Activated B cell treated with CpG ODN at 0.5 μM for 24 hours (primary cell): ENCODE measurements at regions of chr20 and their contacts with region 1.

Region 1: DNA sequence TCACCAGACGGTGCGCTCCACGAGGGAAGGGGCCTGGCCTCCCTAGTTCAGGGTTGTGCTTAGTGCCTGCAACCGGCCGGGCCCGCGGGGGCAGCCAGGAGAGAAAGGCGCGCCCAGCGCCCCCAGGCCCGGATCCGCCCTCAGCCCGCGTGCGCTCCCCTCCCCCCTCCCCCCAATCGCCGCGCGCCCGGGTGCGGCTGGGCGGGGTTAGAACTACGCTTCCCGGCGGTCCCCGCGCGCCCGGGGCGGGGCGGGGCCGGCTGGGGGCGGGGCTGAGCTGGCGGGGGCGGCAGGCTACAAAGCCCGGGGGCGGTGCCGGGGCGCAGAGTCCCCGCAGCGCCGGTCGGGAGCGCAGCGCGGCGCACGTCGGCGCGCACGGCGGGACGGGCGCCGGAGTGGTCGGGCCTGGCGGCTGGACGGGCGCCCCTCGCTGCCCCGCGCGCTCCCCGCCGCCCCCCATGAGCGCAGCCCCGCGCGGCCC is at the start of gene RBM38:
- DNase-seq: peak; percentile 77
- ATAC-seq: peak; percentile 69
- H3K4me3 Mint-ChIP-seq: peak within 1 kb of the TSS; percentile 92
- H3K27ac Mint-ChIP-seq: peak within 1 kb of the TSS; percentile 96
- H3K4me1 Mint-ChIP-seq: peaks cover 63% of the 10 kb centered on the region
- H3K27me3 Mint-ChIP-seq: no peaks in the 10 kb centered on the region
- CTCF ChIP-seq: no peak
- total RNA-seq, gene RBM38: 69.6 and 70.7 TPM in 2 replicates

Region 2: DNA sequence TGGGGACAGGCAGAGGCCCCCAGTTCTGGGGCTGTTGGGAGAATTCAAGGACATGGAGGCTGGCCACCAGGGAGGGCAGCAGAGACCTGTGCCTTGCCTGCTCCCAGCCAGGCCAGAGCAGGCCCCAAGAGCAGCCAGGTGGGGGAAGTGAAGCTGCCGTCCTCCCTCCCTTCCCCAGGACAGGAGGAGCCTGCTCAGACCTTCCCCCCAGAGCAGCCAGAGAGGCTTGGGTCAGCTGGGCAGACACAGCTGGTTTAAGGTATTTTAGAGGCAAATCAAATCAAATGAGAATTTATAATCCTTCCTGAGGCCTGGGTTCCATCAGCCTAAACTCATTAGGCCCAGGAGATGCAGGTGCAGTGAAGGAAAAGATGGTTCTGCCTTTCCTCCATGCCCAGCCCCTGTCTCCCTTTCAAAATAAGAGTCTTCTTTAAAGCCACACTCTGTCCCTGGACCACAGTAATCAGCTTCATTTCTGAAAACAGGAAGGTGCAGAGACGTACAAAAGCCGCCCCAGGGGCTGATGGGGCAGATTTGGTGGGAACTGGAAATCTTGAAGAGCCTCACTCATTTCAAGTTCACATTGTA is 146.4 kb before region 1 on chr20:
- CTCF ChIA-PET with region 1: no interaction called
- POLR2A ChIA-PET with region 1: no interaction called
- intact Hi-C with region 1: no loop called
- DNase-seq: no peak
- ATAC-seq: no peak
- H3K4me3 Mint-ChIP-seq: no peak overlapping the region
- H3K27ac Mint-ChIP-seq: no peak overlapping the region
- H3K4me1 Mint-ChIP-seq: no peaks in the 10 kb centered on the region
- H3K27me3 Mint-ChIP-seq: peaks cover 17% of the 10 kb centered on the region
- CTCF ChIP-seq: no peak

Region 3: GRCh38 chr20:57351042-57351783 is 39.9 kb before region 1 on chr20 and contains the start of gene RAE1:
- CTCF ChIA-PET with region 1: no interaction called
- POLR2A ChIA-PET with region 1: interaction called, 7 read pairs
- intact Hi-C with region 1: loop called (anchors 1 kb)
- DNase-seq: peak; percentile 82
- ATAC-seq: peak; percentile 86
- H3K4me3 Mint-ChIP-seq: peak within 1 kb of the TSS; percentile 90
- H3K27ac Mint-ChIP-seq: peak within 1 kb of the TSS; percentile 79
- H3K4me1 Mint-ChIP-seq: peaks cover 17% of the 10 kb centered on the region
- H3K27me3 Mint-ChIP-seq: peaks cover 3% of the 10 kb centered on the region
- CTCF ChIP-seq: no peak
- total RNA-seq, gene RAE1: 35.7 and 36.6 TPM in 2 replicates

Region 4: GRCh38 chr20:57444394-57445056 is 53.4 kb after region 1 on chr20:
- CTCF ChIA-PET with region 1: no interaction called
- POLR2A ChIA-PET with region 1: no interaction called
- intact Hi-C with region 1: no loop called
- DNase-seq: no peak
- ATAC-seq: no peak
- H3K4me3 Mint-ChIP-seq: no peak overlapping the region
- H3K27ac Mint-ChIP-seq: no peak overlapping the region
- H3K4me1 Mint-ChIP-seq: peaks cover 21% of the 10 kb centered on the region
- H3K27me3 Mint-ChIP-seq: no peaks in the 10 kb centered on the region
- CTCF ChIP-seq: no peak

Region 5: DNA sequence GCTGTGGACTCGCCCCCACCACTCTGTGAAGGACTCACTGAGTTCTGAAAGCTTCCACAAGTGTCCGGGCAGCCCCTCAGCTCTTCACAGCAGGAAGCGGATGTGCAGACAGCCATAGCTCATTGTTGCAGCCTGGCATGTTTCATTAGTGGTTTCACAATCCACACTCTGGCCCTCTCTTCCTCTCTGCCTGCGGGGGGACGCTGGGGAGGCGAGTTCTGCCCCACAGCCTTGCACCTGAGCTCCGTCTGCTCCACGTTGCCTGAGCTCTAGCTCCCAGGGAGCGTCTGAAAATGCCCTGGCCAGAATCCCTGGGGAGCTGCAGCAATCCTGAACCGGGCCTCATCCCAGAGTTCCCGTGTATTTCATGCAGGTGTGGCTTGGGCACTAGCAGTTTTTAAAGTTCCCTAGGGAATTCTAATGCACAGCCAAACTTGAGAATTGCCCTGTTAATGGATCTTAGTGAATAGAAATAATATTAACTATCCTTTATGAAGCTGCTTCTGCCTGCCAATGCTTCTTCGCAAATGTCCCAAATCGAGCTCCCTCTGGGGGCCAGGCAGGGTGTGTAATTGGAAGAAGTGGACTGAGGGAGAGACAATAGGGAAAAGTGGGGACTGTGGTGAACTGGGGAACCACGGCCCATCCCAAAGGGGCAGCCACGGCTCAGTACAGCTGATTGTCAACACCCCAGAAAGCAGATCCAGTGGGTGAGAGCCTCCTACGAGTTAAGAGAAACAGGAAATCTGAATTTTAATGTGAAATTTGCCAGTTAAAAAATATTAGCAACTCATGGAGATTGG is 82.3 kb after region 1 on chr20:
- CTCF ChIA-PET with region 1: interaction called, 13 read pairs
- POLR2A ChIA-PET with region 1: interaction called, 86 read pairs
- intact Hi-C with region 1: loop called (anchors 1 kb)
- DNase-seq: peak; percentile 24
- ATAC-seq: peak; percentile 66
- H3K4me3 Mint-ChIP-seq: peak overlapping the region; percentile 62
- H3K27ac Mint-ChIP-seq: peak overlapping the region; percentile 63
- H3K4me1 Mint-ChIP-seq: peaks cover 87% of the 10 kb centered on the region
- H3K27me3 Mint-ChIP-seq: peaks cover 5% of the 10 kb centered on the region
- CTCF ChIP-seq: no peak

Region 6: DNA sequence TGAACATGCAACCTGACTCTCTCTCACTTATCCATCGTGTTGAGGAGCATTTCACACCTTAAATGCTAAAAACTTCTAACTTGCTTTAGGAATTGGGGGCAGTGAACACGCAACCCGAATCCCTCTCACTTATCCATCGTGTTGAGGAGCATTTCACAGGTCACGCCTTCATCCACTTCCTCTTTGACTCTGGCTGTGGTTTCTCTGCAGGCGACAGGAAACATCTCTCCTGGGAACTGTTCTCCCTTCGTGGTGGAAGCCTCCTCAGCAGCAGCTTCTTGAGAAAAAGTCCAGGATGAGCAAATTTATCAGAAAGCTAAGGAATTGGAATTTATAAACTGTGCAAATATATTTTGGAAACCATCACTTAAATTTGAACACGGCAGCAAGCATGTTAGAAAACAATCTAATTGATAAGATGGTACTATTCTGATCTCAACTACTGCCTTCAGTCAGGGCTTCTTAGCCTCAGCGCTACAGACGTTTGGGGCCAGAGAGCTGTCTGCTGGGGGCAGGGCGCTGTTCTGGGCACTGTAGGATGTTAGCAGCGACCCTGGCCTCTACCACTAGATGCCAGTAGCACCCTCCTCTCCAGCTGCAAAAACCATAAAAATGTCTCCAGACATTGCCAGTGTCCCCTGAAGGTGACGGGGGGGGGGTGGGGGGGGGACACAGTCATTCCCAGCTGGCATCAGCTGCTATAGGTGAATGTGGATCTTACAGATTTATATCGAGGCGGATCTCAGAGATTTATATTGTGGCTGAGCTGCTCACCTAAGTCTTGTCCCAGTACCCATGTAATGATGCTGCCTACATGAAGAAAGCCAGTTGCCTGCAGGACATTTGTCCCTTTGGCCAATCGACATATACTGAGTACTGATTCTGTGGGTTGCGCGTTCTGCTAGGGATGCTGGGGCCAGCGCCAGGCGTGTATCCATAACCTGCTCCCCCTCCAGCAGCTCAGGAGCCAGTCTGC is 107.6 kb after region 1 on chr20:
- CTCF ChIA-PET with region 1: interaction called, 19 read pairs
- POLR2A ChIA-PET with region 1: interaction called, 21 read pairs
- intact Hi-C with region 1: no loop called
- DNase-seq: no peak
- ATAC-seq: peak; percentile 80
- H3K4me3 Mint-ChIP-seq: no peak overlapping the region
- H3K27ac Mint-ChIP-seq: peak overlapping the region; percentile 36
- H3K4me1 Mint-ChIP-seq: peaks cover 34% of the 10 kb centered on the region
- H3K27me3 Mint-ChIP-seq: no peaks in the 10 kb centered on the region
- CTCF ChIP-seq: no peak

Region 7: DNA sequence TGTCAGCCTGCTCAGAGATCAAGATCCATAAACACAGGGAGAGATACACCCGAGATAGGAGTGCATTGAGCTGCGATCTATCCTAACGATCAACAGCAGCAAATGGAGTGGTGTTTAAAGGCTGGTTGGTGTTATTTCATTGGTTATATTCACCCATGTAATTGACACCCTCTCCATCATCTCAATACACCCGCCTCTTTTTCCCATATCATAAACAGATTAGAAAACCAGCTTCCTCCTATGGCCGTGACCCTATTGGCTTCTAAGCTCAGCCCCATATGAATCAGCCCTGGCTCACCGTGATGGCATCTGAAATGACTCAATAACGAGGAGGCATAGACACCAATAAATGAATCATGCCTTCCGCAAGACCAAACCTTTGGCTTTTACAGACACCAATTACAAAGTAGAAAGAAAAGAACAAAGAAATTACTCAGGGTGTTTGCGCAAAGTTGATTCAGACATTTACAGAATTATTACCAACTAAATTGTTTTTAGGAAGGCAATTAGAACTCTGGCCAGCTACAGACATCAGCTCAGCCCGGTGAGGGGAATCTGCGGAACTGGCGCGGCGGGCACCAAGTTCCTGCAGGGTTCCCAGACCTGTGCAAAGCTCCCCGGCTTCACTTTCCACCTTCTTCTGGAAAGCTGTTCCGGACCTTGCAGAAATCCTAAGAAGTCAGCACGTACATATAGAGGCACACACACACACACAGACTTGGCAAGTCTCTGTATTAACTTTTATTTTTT is 307.2 kb after region 1 on chr20:
- CTCF ChIA-PET with region 1: no interaction called
- POLR2A ChIA-PET with region 1: interaction called, 4 read pairs
- intact Hi-C with region 1: loop called (anchors 5 kb)
- DNase-seq: no peak
- ATAC-seq: peak; percentile 35
- H3K4me3 Mint-ChIP-seq: peak overlapping the region; percentile 76
- H3K27ac Mint-ChIP-seq: peak overlapping the region; percentile 92
- H3K4me1 Mint-ChIP-seq: peaks cover 97% of the 10 kb centered on the region
- H3K27me3 Mint-ChIP-seq: no peaks in the 10 kb centered on the region
- CTCF ChIP-seq: no peak

Region 8: DNA sequence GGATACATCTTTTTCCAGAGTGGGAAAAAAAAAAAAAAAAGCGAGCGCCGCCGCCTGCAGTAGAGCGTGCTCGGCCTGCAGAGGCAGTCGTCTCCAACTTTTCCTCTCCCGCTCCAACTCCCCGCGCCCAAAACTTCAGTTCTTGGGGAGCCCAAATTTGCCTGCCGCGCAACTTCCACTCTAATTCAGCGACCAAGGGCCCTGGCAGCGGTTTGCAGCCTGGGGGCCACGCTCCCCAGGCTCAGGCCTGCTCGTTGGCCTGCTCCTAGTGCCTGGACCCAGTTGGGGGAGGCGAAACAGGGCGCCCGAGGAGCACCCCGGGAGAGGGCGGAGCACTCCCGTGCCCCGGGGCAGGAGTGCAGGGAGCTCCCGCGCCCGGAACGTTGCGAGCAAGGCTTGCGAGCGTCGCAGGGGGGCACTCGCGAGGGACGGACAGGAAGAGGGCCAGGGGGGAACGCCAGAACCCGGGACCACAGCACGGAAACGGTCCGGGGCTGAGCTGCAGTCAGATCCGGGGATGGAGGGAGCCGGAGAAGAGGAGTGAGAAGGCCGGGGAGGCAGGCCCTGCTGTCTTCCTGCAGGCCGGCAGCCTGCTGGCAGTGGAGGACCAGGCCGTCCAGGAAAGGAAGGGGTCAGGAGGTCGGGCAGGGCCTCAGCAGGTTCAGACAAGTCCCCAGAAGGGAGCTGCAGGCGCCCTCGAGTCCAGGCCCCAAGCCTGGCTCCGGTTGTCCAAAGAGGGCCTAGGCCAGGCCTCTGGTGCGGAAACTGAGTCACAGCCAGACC is 1259.9 kb after region 1 on chr20 and contains the start of gene STX16:
- CTCF ChIA-PET with region 1: no interaction called
- POLR2A ChIA-PET with region 1: interaction called, 9 read pairs
- intact Hi-C with region 1: loop called (anchors 1 kb)
- DNase-seq: peak; percentile 79
- ATAC-seq: peak; percentile 82
- H3K4me3 Mint-ChIP-seq: peak within 1 kb of the TSS; percentile 97
- H3K27ac Mint-ChIP-seq: peak within 1 kb of the TSS; percentile 93
- H3K4me1 Mint-ChIP-seq: peaks cover 20% of the 10 kb centered on the region
- H3K27me3 Mint-ChIP-seq: no peaks in the 10 kb centered on the region
- CTCF ChIP-seq: no peak
- total RNA-seq, gene STX16: 71.4 and 77.4 TPM in 2 replicates

Region 9: DNA sequence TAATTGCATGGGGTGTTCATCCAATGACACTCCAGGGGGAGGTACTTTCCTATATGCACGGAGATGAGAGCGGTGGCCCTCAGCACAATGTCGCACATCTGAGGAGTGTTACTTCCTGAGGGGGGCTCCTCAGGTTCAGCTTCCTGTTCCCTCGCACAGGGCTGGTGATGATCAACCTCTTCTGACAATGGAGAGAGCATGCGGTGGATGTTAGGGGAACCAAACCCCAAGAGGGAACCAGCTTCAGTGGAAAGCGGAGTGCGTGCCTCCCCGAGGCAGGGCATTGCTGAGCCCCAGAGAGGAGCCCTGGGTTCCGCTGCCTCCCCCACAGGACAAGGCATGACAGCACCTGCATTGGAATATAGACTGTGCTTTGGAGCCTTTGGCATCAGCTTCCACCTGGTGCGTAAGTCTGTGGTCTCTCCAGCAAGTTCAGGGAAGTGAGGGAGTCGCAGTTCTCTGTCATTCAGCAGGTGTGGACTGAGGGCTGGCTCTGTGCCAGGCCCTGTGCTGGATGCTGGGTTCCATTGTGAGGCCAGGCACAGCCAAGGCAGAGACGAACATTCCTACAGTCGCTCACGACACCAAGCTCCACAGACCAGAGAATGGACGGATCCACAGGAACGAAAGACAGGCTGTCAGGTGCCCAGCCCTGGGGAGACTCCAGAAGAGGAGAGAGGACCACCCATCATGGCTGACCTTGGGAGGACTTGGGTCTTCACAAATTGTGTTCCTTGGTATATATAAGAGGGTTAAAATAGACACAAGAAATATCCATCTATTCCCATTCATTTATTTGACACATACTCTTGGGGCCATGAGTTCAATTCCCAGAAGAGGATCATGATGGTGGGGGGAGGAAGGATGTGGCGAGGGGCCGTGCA is 1768.6 kb after region 1 on chr20:
- CTCF ChIA-PET with region 1: no interaction called
- POLR2A ChIA-PET with region 1: no interaction called
- intact Hi-C with region 1: loop called (anchors 10 kb)
- DNase-seq: no peak
- ATAC-seq: peak; percentile 33
- H3K4me3 Mint-ChIP-seq: peak overlapping the region; percentile 65
- H3K27ac Mint-ChIP-seq: peak overlapping the region; percentile 37
- H3K4me1 Mint-ChIP-seq: peaks cover 57% of the 10 kb centered on the region
- H3K27me3 Mint-ChIP-seq: no peaks in the 10 kb centered on the region
- CTCF ChIP-seq: no peak